Panc1 (cell line): ENCODE measurements at regions of chr5 and their contacts with region 1.

Region 1: DNA sequence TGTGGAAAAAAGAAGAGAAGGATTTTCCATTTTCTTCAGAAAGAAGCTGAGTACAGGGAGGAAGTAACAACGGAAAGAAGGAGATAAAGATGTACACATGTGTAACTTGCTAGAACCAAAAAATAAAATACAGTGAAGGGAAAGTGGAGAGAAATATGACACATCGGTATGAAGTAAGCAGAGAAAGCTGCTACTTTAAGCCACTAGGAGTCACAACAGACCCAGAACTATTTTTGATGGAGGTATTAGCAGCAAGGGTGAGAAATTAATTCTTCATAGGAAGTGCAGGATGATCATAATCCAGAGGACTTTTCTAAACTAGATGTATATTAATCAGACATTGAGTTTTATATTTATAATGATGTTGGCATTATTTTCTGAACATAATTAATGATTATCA is 88.5 kb downstream of the FAM174A start:
- DNase-seq: no peak
- ATAC-seq: peak; percentile 58; the same call in 1 of the 2 replicates
- H3K4me3 ChIP-seq: no peak overlapping the region
- H3K27ac ChIP-seq: no peak overlapping the region
- H3K4me1 ChIP-seq: no peaks in the 10 kb centered on the region
- H3K27me3 ChIP-seq: no peaks in the 10 kb centered on the region
- CTCF ChIP-seq: peak; percentile 54; the same call in 1 of the 2 replicates

Region 2: GRCh38 chr5:100634937-100635534 is 11.3 kb after region 1 on chr5:
- CTCF ChIA-PET with region 1: no interaction called
- POLR2A ChIA-PET with region 1: interaction called, 11 read pairs
- in situ Hi-C with region 1: no loop called
- intact Hi-C with region 1: no loop called
- DNase-seq: peak; percentile 18
- ATAC-seq: no peak
- H3K4me3 ChIP-seq: no peak overlapping the region
- H3K27ac ChIP-seq: no peak overlapping the region
- H3K4me1 ChIP-seq: no peaks in the 10 kb centered on the region
- H3K27me3 ChIP-seq: no peaks in the 10 kb centered on the region
- CTCF ChIP-seq: no peak

Region 3: DNA sequence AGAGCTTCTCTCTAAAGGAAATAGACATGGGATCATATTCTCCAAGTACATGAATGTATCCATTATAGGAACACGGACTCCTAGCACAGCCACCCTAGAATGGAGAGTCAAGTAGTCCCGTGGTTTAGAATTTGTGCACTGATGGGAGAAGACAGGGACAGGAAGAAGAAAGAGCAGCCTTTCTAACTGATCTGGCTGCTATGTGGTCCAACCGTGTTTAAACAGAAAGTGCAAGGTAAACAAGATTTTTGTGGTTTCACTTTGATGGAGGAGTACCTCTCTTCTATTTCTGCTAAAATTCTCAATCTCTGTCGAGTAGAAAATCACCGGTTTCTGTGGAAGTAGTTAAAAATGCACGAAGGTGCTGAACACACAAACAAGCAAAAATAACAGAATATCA is 108.0 kb after region 1 on chr5:
- CTCF ChIA-PET with region 1: no interaction called
- POLR2A ChIA-PET with region 1: no interaction called
- in situ Hi-C with region 1: no loop called
- intact Hi-C with region 1: no loop called
- DNase-seq: no peak
- ATAC-seq: no peak
- H3K4me3 ChIP-seq: peak overlapping the region in 1 of 2 experiments; percentile 15; a peak in 2 of 4 replicates
- H3K27ac ChIP-seq: no peak overlapping the region
- H3K4me1 ChIP-seq: no peaks in the 10 kb centered on the region
- H3K27me3 ChIP-seq: no peaks in the 10 kb centered on the region
- CTCF ChIP-seq: no peak